Ovary (tissue), 10 donors: ENCODE measurements at regions of chrX and their contacts with region 1.

Region 1: GRCh38 chrX:103538734-103539141 is 19.4 kb upstream of the RAB40A start:
- DNase-seq: peak in 2 of 5 donors; percentile 38 to 44
- H3K4me3 ChIP-seq: no peak overlapping the region
- H3K27ac ChIP-seq: peak overlapping the region; percentile 63 to 73
- H3K4me1 ChIP-seq: peaks cover 14% of the 10 kb centered on the region
- H3K27me3 ChIP-seq: no peaks in the 10 kb centered on the region
- CTCF ChIP-seq: no peak
- EP300 ChIP-seq: peak; percentile 58
- POLR2A ChIP-seq: peak; percentile 19

Region 2: DNA sequence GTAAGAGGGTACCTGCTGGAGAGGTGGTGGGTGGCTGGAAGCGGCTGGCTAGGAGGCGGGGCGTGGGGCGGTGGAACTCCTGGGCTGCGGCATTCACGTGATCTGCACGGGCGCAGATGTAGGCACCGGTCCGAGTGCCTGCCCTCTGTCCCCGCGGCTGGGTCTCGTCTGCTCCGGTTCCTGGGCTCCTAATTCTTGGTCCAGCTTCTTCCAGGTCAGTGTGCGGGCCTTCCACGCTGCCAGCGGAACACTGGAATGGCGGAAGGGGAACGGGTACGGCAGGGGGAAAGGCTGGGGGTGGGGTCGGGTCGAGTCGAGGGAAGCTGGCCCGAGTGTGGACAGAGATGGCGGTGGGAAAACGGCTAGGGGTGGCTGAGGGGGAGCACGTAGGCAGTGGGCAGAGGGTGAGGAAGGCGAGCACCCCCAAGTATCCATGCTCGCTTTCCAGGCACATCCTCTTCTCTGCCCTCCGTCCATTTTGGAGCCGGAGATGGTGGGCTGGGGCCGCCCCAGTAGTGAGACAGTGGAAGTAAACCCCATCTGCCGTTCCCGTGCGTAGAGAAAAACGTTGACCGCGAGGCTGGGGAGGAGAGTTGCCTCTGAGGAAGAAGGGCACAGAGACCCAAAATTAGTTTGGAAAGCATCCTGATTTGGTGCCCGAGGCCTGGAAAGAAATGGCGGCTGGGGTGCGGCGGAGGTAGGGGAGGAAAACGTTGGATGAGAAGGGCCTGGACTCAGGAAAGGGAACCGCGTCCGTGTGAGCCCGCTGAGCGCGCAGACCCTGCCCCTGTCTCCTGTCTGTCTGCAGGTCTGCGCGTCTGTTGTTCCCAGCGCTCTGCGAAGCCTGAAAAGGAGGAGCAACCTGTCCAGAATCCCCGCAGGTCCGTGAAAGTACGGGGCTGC is 46.9 kb after region 1 on chrX and contains the start of gene TCEAL4:
- intact Hi-C with region 1: loop called in 1 of 4 experiments (anchors 5 kb)
- DNase-seq: peak; percentile 74 to 83 (median 74)
- H3K4me3 ChIP-seq: peak within 1 kb of the TSS; percentile 56
- H3K27ac ChIP-seq: peak within 1 kb of the TSS; percentile 79 to 84
- H3K4me1 ChIP-seq: peaks cover 4% of the 10 kb centered on the region
- H3K27me3 ChIP-seq: no peaks in the 10 kb centered on the region
- CTCF ChIP-seq: no peak
- EP300 ChIP-seq: no peak
- POLR2A ChIP-seq: peak; percentile 61
- total RNA-seq, gene TCEAL4: 333 to 772 (median 462) TPM

Region 3: GRCh38 chrX:103629318-103630170 is 90.8 kb after region 1 on chrX:
- intact Hi-C with region 1: loop called in 3 of 4 experiments (anchors 2 to 10 kb)
- DNase-seq: peak; percentile 76 to 84 (median 77)
- H3K4me3 ChIP-seq: peak overlapping the region; percentile 59
- H3K27ac ChIP-seq: peak overlapping the region; percentile 92 to 94
- H3K4me1 ChIP-seq: no peaks in the 10 kb centered on the region
- H3K27me3 ChIP-seq: no peaks in the 10 kb centered on the region
- CTCF ChIP-seq: peak; percentile 28 to 51 (median 31)
- EP300 ChIP-seq: no peak
- POLR2A ChIP-seq: peak; percentile 40